B cell (primary cell): ENCODE measurements at regions of chr7 and their contacts with region 1.

Region 1: GRCh38 chr7:115410972-115411686 is 489.2 kb downstream of the MDFIC start:
- DNase-seq: peak; percentile 74
- ATAC-seq: peak; percentile 84
- H3K4me3 ChIP-seq: peak overlapping the region in 2 of 5 experiments; percentile 8 to 44
- H3K4me3 Mint-ChIP-seq: peak overlapping the region; percentile 75
- H3K27ac ChIP-seq: peak overlapping the region; percentile 57 to 78
- H3K27ac Mint-ChIP-seq: peak overlapping the region; percentile 85
- H3K4me1 ChIP-seq: peaks cover 24 to 25% of the 10 kb centered on the region in 2 donors
- H3K4me1 Mint-ChIP-seq: peaks cover 24% of the 10 kb centered on the region
- H3K27me3 ChIP-seq: no peaks in the 10 kb centered on the region
- H3K27me3 Mint-ChIP-seq: peaks cover 3% of the 10 kb centered on the region
- CTCF ChIP-seq: no peak

Region 2: DNA sequence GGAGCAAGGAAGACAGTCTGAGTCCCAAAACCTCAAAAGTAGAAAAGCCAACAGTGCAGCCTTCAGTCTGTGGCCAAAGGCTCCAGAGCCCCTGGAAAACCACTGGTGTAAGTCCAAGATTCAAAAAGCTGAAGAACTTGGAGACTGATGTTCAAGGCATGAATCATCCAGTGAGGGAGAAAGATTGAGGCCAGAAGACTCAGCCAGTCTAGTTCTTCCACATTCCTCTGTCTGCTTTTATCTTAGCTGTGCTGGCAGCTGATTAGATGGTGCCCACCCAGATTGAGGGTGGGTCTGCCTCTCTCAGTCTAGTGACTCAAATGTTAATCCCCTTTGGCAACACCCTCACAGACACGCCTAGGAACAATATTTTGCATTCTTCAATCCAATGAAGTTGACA is 509.3 kb before region 1 on chr7:
- CTCF ChIA-PET with region 1: no interaction called
- POLR2A ChIA-PET with region 1: no interaction called
- intact Hi-C with region 1: no loop called
- DNase-seq: no peak
- ATAC-seq: no peak
- H3K4me3 ChIP-seq: no peak overlapping the region
- H3K4me3 Mint-ChIP-seq: no peak overlapping the region
- H3K27ac ChIP-seq: no peak overlapping the region
- H3K27ac Mint-ChIP-seq: no peak overlapping the region
- H3K4me1 ChIP-seq: no peaks in the 10 kb centered on the region
- H3K4me1 Mint-ChIP-seq: no peaks in the 10 kb centered on the region
- H3K27me3 ChIP-seq: peaks cover 0 to 4% (median 0%) of the 10 kb centered on the region in 4 experiments
- H3K27me3 Mint-ChIP-seq: no peaks in the 10 kb centered on the region
- CTCF ChIP-seq: no peak

Region 3: GRCh38 chr7:114922016-114922651 is 489.0 kb before region 1 on chr7 and contains the start of gene MDFIC:
- CTCF ChIA-PET with region 1: no interaction called
- POLR2A ChIA-PET with region 1: no interaction called
- intact Hi-C with region 1: loop called (anchors 5 kb)
- DNase-seq: no peak
- ATAC-seq: peak; percentile 62
- H3K4me3 ChIP-seq: peak within 1 kb of the TSS; percentile 57 to 90 (median 88)
- H3K4me3 Mint-ChIP-seq: peak within 1 kb of the TSS; percentile 99
- H3K27ac ChIP-seq: peak within 1 kb of the TSS; percentile 82 to 91
- H3K27ac Mint-ChIP-seq: peak within 1 kb of the TSS; percentile 98
- H3K4me1 ChIP-seq: peaks cover 33 to 36% of the 10 kb centered on the region in 2 donors
- H3K4me1 Mint-ChIP-seq: peaks cover 70% of the 10 kb centered on the region
- H3K27me3 ChIP-seq: no peaks in the 10 kb centered on the region
- H3K27me3 Mint-ChIP-seq: no peaks in the 10 kb centered on the region
- CTCF ChIP-seq: no peak
- total RNA-seq, gene MDFIC: 56.0 and 66.1 TPM in 2 replicates

Region 4: GRCh38 chr7:115435178-115435577 is 24.0 kb after region 1 on chr7:
- CTCF ChIA-PET with region 1: no interaction called
- POLR2A ChIA-PET with region 1: no interaction called
- intact Hi-C with region 1: loop called (anchors 2 kb)
- DNase-seq: peak; percentile 75
- ATAC-seq: peak; percentile 99
- H3K4me3 ChIP-seq: peak overlapping the region in 1 of 5 experiments; percentile 27
- H3K4me3 Mint-ChIP-seq: peak overlapping the region; percentile 62
- H3K27ac ChIP-seq: no peak overlapping the region
- H3K27ac Mint-ChIP-seq: peak overlapping the region; percentile 21
- H3K4me1 ChIP-seq: peaks cover 23 to 30% of the 10 kb centered on the region in 2 donors
- H3K4me1 Mint-ChIP-seq: peaks cover 37% of the 10 kb centered on the region
- H3K27me3 ChIP-seq: no peaks in the 10 kb centered on the region
- H3K27me3 Mint-ChIP-seq: no peaks in the 10 kb centered on the region
- CTCF ChIP-seq: no peak

Region 5: DNA sequence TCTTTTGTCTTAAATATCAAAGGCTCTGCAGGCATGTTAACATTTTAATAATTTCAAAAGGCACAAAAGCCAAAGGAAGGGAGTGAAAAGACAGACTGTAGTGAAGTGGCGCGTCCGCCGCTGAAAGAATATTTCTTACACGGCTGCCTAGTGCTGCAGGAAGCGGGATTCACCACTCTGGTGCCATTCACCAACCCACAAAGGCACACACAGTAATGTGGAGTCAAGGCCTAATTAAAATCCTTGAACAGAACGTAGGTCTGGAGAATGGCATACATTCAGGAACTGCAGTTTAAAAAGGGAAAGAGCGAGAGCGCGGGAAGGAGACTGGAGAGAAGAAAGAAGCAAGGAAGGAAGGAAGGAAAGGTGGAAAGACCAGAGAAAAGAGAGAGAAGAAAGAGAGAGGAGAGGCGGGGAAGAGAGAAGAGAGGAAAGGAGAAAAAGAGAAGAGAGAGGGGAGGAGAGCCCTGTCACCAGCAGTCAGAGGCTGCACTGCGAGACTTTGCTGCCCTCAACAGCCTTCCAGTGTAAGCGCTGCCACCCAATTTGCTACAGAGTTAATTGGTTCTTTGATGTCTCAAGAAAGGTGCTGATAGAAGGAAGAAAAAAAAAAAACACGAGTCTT is 64.7 kb after region 1 on chr7:
- CTCF ChIA-PET with region 1: no interaction called
- POLR2A ChIA-PET with region 1: no interaction called
- intact Hi-C with region 1: loop called (anchors 2 kb)
- DNase-seq: peak; percentile 39
- ATAC-seq: no peak
- H3K4me3 ChIP-seq: no peak overlapping the region
- H3K4me3 Mint-ChIP-seq: no peak overlapping the region
- H3K27ac ChIP-seq: no peak overlapping the region
- H3K27ac Mint-ChIP-seq: no peak overlapping the region
- H3K4me1 ChIP-seq: peaks cover 12 to 16% of the 10 kb centered on the region in 2 donors
- H3K4me1 Mint-ChIP-seq: peaks cover 11% of the 10 kb centered on the region
- H3K27me3 ChIP-seq: peaks cover 0 to 27% (median 13%) of the 10 kb centered on the region in 4 experiments
- H3K27me3 Mint-ChIP-seq: peaks cover 39% of the 10 kb centered on the region
- CTCF ChIP-seq: peak; percentile 28